ENCODE measurements at regions of chr4 and their contacts with region 1.

Region 1: GRCh38 chr4:183659029-183659871 is at the starts of genes RWDD4 and TRAPPC11:
- DNase-seq: peak; percentile 99
- ATAC-seq: peak; percentile 100
- H3K4me3 ChIP-seq: peak within 1 kb of the TSS; percentile 97
- H3K27ac ChIP-seq: peak within 1 kb of the TSS in 1 of 2 donors; percentile 92
- H3K4me1 ChIP-seq: peaks cover 0 to 6% of the 10 kb centered on the region in 2 donors
- H3K27me3 ChIP-seq: no peaks in the 10 kb centered on the region
- total RNA-seq, gene RWDD4: 17.3 to 20.2 TPM
- total RNA-seq, gene TRAPPC11: 31.9 to 44.6 TPM

Region 2: DNA sequence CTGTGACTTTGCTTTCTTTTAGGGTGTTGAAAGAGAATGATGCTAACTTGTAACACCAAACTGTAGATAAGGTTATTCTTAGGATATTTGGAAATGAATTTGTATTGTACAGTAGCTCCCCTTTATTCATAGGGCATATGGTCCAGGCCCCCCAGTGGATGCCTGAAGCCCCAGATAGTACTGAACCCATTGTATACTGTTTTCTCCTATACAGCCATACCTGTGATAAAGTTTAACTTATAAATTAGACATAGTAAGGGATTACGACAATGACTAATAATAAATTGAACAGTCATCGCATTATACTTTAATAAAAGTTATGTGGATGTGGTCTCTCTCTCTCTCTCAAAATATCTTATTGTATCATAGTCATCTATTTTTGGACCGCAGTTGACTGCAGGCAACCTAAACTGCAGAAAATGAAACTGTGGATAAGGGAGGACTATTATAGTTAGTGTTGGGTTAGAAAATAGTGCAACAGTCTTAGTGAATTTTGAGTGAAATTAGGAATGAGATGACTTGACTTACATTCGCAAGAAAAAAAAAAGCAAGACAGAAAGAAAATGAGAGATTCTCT is 444.2 kb before region 1 on chr4:
- intact Hi-C with region 1: loop called in 1 of 2 experiments (anchors 5 kb)
- DNase-seq: no peak
- ATAC-seq: no peak
- H3K4me3 ChIP-seq: no peak overlapping the region
- H3K27ac ChIP-seq: no peak overlapping the region
- H3K4me1 ChIP-seq: peaks cover 0 to 3% of the 10 kb centered on the region in 2 donors
- H3K27me3 ChIP-seq: no peaks in the 10 kb centered on the region

Region 3: GRCh38 chr4:183471946-183472708 is 187.1 kb before region 1 on chr4:
- intact Hi-C with region 1: loop called (anchors 5 to 10 kb)
- DNase-seq: peak; percentile 91 to 95
- ATAC-seq: peak; percentile 89
- H3K4me3 ChIP-seq: peak overlapping the region in 1 of 2 donors; percentile 5
- H3K27ac ChIP-seq: no peak overlapping the region
- H3K4me1 ChIP-seq: peaks cover 0 to 1% of the 10 kb centered on the region in 2 donors
- H3K27me3 ChIP-seq: no peaks in the 10 kb centered on the region

Region 4: DNA sequence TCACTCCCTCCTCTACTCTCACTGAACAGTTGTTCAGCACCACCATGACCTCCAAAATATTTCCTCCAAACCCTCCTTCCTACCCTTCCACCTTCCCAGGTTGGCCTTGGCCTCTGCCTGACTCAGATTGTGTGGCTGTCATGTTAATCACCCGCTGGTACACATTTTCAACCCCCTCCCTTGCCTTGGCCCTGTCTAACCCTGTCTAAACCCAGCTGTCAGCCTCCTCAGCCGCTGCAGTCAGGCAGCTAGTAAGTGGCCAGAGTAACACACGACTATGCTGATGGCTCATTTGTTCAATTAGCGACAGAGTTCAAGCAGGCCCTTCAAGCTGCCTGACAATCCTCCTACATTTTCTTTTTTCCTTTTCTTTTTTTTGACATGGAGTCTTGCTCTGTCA is 136.4 kb before region 1 on chr4:
- intact Hi-C with region 1: no loop called
- DNase-seq: no peak
- ATAC-seq: no peak
- H3K4me3 ChIP-seq: no peak overlapping the region
- H3K27ac ChIP-seq: no peak overlapping the region
- H3K4me1 ChIP-seq: no peaks in the 10 kb centered on the region
- H3K27me3 ChIP-seq: no peaks in the 10 kb centered on the region

Measured in aorta (tissue), 5 donors.